OCI-LY7 (cell line): ENCODE measurements at regions of chr20 and their contacts with region 1.

Region 1: DNA sequence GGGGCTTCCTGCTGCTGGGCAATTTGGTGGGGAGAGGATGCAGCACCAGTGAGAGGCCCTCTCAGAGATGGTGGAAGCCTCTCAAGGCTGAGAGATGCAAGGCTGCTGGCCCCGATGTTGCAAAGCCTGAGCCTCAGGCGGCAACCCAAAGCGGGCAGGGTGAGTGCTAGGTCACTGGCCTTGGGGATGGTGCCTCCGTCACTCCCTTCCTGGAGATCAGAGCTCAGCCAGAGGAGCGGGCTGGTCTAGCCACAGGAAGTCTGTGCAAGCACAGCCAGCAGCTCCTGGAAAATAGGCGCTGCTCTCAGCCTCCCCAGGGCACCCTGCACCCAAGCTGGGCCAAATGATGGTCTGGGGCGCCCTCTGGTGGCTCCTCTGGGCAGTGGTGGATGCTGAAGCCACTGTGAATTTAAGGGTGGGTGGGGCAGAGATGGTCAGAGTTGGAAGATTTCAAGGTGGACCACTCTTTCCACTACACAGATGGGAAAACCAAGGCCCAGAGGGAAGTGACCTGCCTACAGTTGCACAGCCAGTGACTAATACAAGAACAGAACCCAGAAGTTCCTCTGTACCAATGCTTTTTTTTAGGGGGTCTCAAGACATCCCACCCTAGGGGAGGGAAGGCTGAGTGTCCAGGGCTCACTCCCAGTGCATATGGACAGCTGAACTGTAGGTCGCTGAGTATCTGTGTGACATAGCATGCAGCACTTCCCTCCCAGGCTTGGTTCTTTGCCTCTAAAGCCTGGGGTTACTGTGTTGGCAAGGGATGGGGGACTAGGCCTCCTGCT is 20.8 kb downstream of the C20orf203 start:
- DNase-seq: peak; percentile 86
- H3K4me3 ChIP-seq: no peak overlapping the region
- H3K27ac ChIP-seq: no peak overlapping the region
- H3K4me1 ChIP-seq: peaks cover 17% of the 10 kb centered on the region
- CTCF ChIP-seq: peak; percentile 89

Region 2: DNA sequence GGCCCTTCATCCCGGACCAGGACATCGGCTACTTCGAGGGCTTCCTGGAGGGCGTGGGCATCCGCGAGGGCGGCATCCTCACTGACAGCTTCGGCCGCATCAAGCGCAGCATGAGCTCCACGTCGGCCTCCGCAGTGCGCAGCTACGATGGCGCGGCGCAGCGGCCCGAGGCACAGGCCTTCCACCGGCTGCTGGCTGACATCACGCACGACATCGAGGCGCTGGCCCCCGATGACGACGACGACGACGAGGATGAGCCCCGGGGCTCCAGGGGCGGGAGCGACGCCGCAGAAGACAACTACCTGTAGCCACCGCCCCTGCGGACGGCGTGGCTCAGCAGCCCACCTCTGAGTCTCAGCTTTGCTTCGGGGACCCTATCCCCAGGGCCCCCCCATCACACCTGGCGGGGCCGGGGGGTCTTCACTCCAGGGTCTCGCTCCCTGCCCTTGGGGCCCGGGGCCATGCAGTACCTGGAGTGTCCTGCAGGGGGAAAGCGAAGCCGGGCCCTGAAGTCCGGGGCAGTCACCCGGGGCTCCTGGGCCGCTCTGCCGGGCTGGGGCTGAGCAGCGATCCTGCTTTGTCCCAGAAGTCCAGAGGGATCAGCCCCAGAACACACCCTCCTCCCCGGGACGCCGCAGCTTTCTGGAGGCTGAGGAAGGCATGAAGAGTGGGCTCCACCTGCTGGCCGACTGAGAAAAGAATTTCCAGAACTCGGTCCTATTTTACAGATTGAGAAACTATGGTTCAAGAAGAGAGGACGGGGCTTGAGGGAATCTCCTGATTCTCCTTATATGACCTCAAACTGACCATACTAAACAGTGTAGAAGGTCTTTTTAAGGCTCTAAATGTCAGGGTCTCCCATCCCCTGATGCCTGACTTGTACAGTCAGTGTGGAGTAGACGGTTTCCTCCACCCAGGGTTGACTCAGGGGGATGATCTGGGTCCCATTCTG is 621.6 kb before region 1 on chr20:
- CTCF ChIA-PET with region 1: no interaction called
- POLR2A ChIA-PET with region 1: no interaction called
- intact Hi-C with region 1: loop called (anchors 1 kb)
- DNase-seq: peak; percentile 66
- H3K4me3 ChIP-seq: peak overlapping the region; percentile 51
- H3K27ac ChIP-seq: no peak overlapping the region
- H3K4me1 ChIP-seq: peaks cover 32% of the 10 kb centered on the region
- CTCF ChIP-seq: peak; percentile 98

Region 3: GRCh38 chr20:32155017-32155981 is 497.6 kb before region 1 on chr20:
- CTCF ChIA-PET with region 1: no interaction called
- POLR2A ChIA-PET with region 1: no interaction called
- intact Hi-C with region 1: loop called (anchors 10 kb)
- DNase-seq: peak; percentile 57
- H3K4me3 ChIP-seq: no peak overlapping the region
- H3K27ac ChIP-seq: no peak overlapping the region
- H3K4me1 ChIP-seq: no peaks in the 10 kb centered on the region
- CTCF ChIP-seq: peak; percentile 72

Region 4: GRCh38 chr20:32336918-32337347 is 316.0 kb before region 1 on chr20:
- CTCF ChIA-PET with region 1: no interaction called
- POLR2A ChIA-PET with region 1: no interaction called
- intact Hi-C with region 1: loop called (anchors 2 kb)
- DNase-seq: peak; percentile 69
- H3K4me3 ChIP-seq: no peak overlapping the region
- H3K27ac ChIP-seq: no peak overlapping the region
- H3K4me1 ChIP-seq: peaks cover 8% of the 10 kb centered on the region
- CTCF ChIP-seq: peak; percentile 80

Region 5: DNA sequence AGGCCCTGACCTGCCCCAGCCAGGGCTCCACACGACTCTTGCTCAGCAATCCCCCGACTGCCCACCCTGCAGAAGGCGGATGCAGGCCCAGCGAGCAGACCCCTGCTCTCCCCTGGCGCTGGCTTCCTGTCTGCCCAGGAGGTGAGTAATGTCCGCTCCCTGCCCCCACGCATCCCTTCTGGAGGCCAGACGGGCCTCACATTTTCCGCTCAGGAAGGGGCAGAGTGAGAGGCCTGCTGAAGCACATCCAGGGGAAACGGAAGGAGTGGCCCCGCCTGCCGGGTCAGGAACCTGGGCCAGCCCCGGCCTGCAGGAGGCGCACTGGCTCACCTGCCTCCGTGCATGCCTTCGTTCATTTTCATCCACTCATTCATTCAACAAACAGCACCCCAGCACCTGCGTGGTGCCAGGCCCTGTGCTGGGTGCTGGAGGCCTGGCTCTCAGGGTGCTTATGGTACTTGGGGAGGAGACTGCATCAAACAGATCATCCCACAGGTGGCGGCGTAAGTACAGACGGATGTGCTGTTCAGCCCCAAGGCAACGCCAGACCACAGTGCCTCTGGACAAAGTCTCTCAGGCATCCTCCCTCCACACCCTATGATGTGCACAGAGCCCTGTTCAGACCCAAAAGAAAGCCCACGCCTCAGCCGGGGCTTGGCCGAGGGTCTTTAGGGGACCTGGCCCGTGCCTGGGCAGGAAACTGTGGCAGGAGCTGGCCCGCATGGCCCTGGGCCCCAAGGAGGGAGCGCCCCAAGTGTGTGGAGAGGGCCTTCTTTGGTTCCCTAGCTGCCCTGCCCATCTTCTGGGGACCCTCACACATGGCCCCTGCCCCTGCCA is 182.7 kb before region 1 on chr20:
- CTCF ChIA-PET with region 1: no interaction called
- POLR2A ChIA-PET with region 1: no interaction called
- intact Hi-C with region 1: loop called (anchors 1 kb)
- DNase-seq: peak; percentile 61
- H3K4me3 ChIP-seq: no peak overlapping the region
- H3K27ac ChIP-seq: no peak overlapping the region
- H3K4me1 ChIP-seq: no peaks in the 10 kb centered on the region
- CTCF ChIP-seq: peak; percentile 72

Region 6: GRCh38 chr20:32521780-32522525 is 131.0 kb before region 1 on chr20:
- CTCF ChIA-PET with region 1: interaction called, 12 read pairs
- POLR2A ChIA-PET with region 1: no interaction called
- intact Hi-C with region 1: loop called (anchors 1 kb)
- DNase-seq: peak; percentile 73
- H3K4me3 ChIP-seq: no peak overlapping the region
- H3K27ac ChIP-seq: no peak overlapping the region
- H3K4me1 ChIP-seq: peaks cover 24% of the 10 kb centered on the region
- CTCF ChIP-seq: peak; percentile 93